H1 (cell line): ENCODE measurements at regions of chr14 and their contacts with region 1.

Region 1: GRCh38 chr14:56659964-56660551 is 80.5 kb downstream of the TMEM260 start:
- DNase-seq: no peak
- H3K4me3 ChIP-seq: no peak overlapping the region
- H3K27ac ChIP-seq: no peak overlapping the region
- H3K4me1 ChIP-seq: peaks cover 0 to 7% (median 3%) of the 10 kb centered on the region in 4 experiments; a peak in 6 of 7 replicates
- H3K27me3 ChIP-seq: peaks cover 0 to 2% (median 0%) of the 10 kb centered on the region in 4 experiments; a peak in 2 of 7 replicates
- CTCF ChIP-seq: peak in 2 of 3 experiments; percentile 55 to 81; a peak in 3 of 4 replicates
- EP300 ChIP-seq: no peak
- POLR2A ChIP-seq: no peak
- RAD21 ChIP-seq: peak; percentile 88 to 90

Region 2: GRCh38 chr14:56463271-56463890 is 196.7 kb before region 1 on chr14:
- CTCF ChIA-PET with region 1: no interaction called
- POLR2A ChIA-PET with region 1: no interaction called
- DNase-seq: no peak
- H3K4me3 ChIP-seq: no peak overlapping the region
- H3K27ac ChIP-seq: no peak overlapping the region
- H3K4me1 ChIP-seq: no peaks in the 10 kb centered on the region
- H3K27me3 ChIP-seq: no peaks in the 10 kb centered on the region
- CTCF ChIP-seq: no peak
- EP300 ChIP-seq: no peak
- POLR2A ChIP-seq: no peak
- RAD21 ChIP-seq: no peak

Region 3: GRCh38 chr14:56635041-56635440 is 25.0 kb before region 1 on chr14:
- CTCF ChIA-PET with region 1: no interaction called
- POLR2A ChIA-PET with region 1: no interaction called
- DNase-seq: no peak
- H3K4me3 ChIP-seq: no peak overlapping the region
- H3K27ac ChIP-seq: no peak overlapping the region
- H3K4me1 ChIP-seq: no peaks in the 10 kb centered on the region
- H3K27me3 ChIP-seq: no peaks in the 10 kb centered on the region
- CTCF ChIP-seq: no peak
- EP300 ChIP-seq: no peak
- POLR2A ChIP-seq: no peak
- RAD21 ChIP-seq: no peak

Region 4: GRCh38 chr14:56648508-56649301 is 11.4 kb before region 1 on chr14:
- CTCF ChIA-PET with region 1: interaction called, 17 read pairs
- POLR2A ChIA-PET with region 1: no interaction called
- DNase-seq: no peak
- H3K4me3 ChIP-seq: no peak overlapping the region
- H3K27ac ChIP-seq: no peak overlapping the region
- H3K4me1 ChIP-seq: peaks cover 0 to 6% (median 0%) of the 10 kb centered on the region in 4 experiments; a peak in 1 of 7 replicates
- H3K27me3 ChIP-seq: no peaks in the 10 kb centered on the region
- CTCF ChIP-seq: no peak
- EP300 ChIP-seq: no peak
- POLR2A ChIP-seq: no peak
- RAD21 ChIP-seq: no peak

Region 5: DNA sequence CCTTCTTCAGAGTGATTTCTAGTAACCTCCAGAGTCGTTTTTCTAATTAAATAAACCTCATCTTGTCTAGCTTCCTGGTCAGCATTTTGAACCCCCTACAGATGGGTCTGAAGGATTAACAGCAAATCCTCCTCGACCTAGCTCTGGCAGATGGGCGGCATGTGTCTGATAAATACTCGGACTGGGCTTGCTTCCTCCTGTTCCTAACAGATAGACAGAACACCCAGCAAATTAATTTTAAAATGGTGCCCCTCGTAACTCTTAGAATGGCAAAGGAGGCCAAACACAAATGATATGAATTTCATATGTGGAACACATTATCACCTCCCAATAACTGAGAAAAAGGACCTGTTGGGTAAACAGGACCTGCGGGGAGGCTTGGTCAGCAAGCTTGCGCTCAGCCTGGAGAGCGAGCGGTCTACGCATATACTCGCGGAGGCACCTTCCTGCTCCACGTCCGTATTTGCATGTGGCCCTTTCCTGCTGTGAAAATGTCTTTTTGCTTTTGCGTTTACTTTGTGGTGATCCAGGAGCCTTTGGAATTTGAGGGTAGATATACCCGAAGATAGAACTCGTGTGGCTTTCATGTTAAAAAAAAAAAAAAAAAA is 70.6 kb after region 1 on chr14:
- CTCF ChIA-PET with region 1: no interaction called
- POLR2A ChIA-PET with region 1: no interaction called
- DNase-seq: no peak
- H3K4me3 ChIP-seq: peak overlapping the region in 1 of 4 experiments; percentile 6; a peak in 2 of 8 replicates
- H3K27ac ChIP-seq: no peak overlapping the region
- H3K4me1 ChIP-seq: peaks cover 5 to 24% (median 19%) of the 10 kb centered on the region in 4 experiments
- H3K27me3 ChIP-seq: peaks cover 0 to 12% (median 10%) of the 10 kb centered on the region in 4 experiments; a peak in 4 of 7 replicates
- CTCF ChIP-seq: no peak
- EP300 ChIP-seq: no peak
- POLR2A ChIP-seq: no peak
- RAD21 ChIP-seq: no peak

Region 6: GRCh38 chr14:56829151-56829550 is 169.1 kb after region 1 on chr14:
- CTCF ChIA-PET with region 1: no interaction called
- POLR2A ChIA-PET with region 1: no interaction called
- DNase-seq: no peak
- H3K4me3 ChIP-seq: no peak overlapping the region
- H3K27ac ChIP-seq: no peak overlapping the region
- H3K4me1 ChIP-seq: no peaks in the 10 kb centered on the region
- H3K27me3 ChIP-seq: peaks cover 0 to 3% (median 0%) of the 10 kb centered on the region in 4 experiments; a peak in 1 of 7 replicates
- CTCF ChIP-seq: no peak
- EP300 ChIP-seq: no peak
- POLR2A ChIP-seq: no peak
- RAD21 ChIP-seq: no peak